ENCODE measurements at regions of chr5 and their contacts with region 1.

Region 1: DNA sequence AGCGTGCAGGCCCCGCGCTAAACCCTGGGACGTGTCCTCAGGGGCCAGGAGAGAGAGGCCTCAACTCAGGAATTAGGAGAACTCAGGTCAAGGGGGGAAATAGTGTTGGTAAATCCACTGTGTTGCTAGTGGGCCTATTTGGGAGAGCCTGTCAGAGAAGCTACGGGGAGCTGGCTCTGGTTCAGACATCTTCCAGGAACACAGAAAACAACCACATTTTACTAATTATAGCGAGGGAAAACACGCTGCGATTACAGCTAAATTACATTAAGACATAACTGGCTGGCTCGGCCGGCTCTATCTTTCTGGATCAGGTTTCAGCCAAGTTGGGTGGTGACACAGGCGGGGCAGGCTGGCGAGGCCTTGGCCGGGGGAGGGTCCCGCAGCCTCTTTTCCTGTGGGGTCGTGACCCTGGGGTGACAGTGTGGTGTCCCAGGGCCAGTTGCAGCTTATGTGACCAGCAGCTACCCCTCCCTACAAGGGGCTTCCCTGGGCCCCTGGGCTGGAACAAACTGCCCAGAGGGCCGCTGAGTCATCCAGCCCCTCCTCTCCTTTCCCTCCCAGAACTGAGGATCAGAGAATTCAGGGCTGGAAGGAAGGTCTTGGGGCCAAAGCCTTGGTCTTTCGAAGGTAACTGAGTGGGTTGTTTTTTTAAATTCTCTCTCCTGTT is 75.1 kb downstream of the FGF18 start:
- DNase-seq: peak; percentile 79
- H3K4me3 ChIP-seq: no peak overlapping the region
- H3K27ac ChIP-seq: peak overlapping the region; percentile 79
- H3K4me1 ChIP-seq: peaks cover 16% of the 10 kb centered on the region
- H3K27me3 ChIP-seq: no peaks in the 10 kb centered on the region
- CTCF ChIP-seq: no peak

Region 2: DNA sequence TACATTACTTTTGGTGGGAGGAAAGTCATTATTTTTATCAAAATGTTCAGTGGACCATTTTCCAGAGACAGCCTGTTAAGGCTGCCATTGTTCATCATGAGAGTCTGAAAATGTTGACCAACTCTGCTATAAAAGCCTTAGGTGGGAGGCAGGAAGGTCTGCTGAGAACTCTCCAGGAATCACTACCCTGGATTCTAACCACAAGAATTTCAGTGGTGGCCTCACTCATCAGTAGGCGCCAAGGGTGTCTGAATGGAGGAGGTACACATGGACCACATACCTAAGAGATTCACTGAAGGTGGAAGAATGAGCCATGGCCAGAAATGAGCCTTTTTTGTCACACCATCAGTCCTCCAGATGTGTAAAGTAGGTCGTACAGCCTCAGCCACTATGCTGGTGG is 206.5 kb before region 1 on chr5:
- CTCF ChIA-PET with region 1: no interaction called
- POLR2A ChIA-PET with region 1: no interaction called
- intact Hi-C with region 1: no loop called
- DNase-seq: no peak
- H3K4me3 ChIP-seq: no peak overlapping the region
- H3K27ac ChIP-seq: no peak overlapping the region
- H3K4me1 ChIP-seq: no peaks in the 10 kb centered on the region
- H3K27me3 ChIP-seq: peaks cover 21% of the 10 kb centered on the region
- CTCF ChIP-seq: no peak

Region 3: GRCh38 chr5:171537070-171537849 is 42.7 kb after region 1 on chr5:
- CTCF ChIA-PET with region 1: no interaction called
- POLR2A ChIA-PET with region 1: no interaction called
- intact Hi-C with region 1: loop called (anchors 5 kb)
- DNase-seq: peak; percentile 50
- H3K4me3 ChIP-seq: no peak overlapping the region
- H3K27ac ChIP-seq: no peak overlapping the region
- H3K4me1 ChIP-seq: peaks cover 5% of the 10 kb centered on the region
- H3K27me3 ChIP-seq: no peaks in the 10 kb centered on the region
- CTCF ChIP-seq: no peak

Region 4: DNA sequence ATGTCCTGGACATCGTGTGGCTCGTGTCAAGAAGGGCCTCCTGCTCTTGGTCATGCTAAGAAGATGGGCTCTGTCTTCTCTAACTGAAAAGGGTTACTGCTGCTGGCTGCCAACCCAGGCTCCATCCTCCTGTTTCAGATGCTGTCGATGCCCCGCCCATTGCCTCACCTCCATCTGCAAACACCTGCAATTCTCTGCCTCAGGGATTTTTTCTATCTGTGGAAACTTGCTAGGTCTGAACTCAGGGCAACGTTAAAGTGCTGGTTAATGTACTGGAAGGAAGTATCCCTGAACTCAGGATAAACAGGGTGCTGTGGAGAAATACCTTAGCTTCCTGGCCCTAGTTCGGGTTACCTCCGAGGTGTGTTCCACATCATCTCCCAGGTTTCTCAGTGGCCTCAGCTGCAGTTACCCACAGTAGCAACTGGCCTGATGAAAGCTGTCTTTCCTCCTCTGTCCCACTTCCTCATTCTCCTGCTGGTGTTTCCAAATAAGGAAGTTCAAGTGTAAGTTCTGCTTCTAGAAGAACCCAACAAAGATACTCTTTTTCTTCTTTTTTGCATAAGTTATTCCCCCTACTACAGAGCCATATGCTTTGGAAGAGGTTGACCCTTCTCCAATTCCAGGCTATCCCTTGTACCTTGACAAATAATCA is 139.4 kb after region 1 on chr5:
- CTCF ChIA-PET with region 1: no interaction called
- POLR2A ChIA-PET with region 1: no interaction called
- intact Hi-C with region 1: no loop called
- DNase-seq: no peak
- H3K4me3 ChIP-seq: no peak overlapping the region
- H3K27ac ChIP-seq: no peak overlapping the region
- H3K4me1 ChIP-seq: no peaks in the 10 kb centered on the region
- H3K27me3 ChIP-seq: no peaks in the 10 kb centered on the region
- CTCF ChIP-seq: no peak

Region 5: GRCh38 chr5:172984243-172984953 is 1489.8 kb after region 1 on chr5:
- CTCF ChIA-PET with region 1: no interaction called
- POLR2A ChIA-PET with region 1: no interaction called
- intact Hi-C with region 1: no loop called
- DNase-seq: peak; percentile 83
- H3K4me3 ChIP-seq: peak overlapping the region; percentile 91
- H3K27ac ChIP-seq: peak overlapping the region; percentile 81
- H3K4me1 ChIP-seq: no peaks in the 10 kb centered on the region
- H3K27me3 ChIP-seq: no peaks in the 10 kb centered on the region
- CTCF ChIP-seq: peak; percentile 49

Measured in A673 (cell line).